ENCODE measurements at regions of chr6 and their contacts with region 1.

Region 1: DNA sequence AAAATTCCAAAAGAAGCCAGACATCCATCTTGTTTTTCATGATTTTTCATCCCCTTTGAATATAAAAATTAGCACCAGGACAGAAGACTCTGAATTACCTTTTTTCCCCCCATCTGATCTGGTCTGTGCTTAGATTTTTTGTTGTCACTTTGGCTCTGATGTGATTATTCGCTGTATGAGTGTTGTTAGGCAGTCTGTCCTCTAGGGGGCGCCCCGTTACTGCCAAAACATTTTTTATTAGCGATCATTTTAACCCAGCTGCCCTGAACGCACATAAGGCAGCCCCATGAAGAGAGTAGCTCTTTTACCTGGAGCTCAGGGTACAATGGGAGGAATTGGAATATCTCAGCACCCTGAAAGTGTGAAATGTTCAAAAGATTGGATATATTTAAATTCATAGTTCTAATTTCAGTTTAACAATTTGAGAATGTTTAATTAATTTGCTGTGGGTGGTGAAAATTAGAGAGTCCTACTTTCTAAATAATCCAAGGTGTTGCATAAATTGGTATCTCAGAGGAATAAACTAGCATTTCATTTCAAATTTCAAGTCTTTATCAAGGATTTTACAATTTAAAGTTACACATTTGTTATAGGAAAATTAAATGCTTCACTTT is 60.8 kb downstream of the PRPH2 start:
- DNase-seq: peak; percentile 62

Region 2: DNA sequence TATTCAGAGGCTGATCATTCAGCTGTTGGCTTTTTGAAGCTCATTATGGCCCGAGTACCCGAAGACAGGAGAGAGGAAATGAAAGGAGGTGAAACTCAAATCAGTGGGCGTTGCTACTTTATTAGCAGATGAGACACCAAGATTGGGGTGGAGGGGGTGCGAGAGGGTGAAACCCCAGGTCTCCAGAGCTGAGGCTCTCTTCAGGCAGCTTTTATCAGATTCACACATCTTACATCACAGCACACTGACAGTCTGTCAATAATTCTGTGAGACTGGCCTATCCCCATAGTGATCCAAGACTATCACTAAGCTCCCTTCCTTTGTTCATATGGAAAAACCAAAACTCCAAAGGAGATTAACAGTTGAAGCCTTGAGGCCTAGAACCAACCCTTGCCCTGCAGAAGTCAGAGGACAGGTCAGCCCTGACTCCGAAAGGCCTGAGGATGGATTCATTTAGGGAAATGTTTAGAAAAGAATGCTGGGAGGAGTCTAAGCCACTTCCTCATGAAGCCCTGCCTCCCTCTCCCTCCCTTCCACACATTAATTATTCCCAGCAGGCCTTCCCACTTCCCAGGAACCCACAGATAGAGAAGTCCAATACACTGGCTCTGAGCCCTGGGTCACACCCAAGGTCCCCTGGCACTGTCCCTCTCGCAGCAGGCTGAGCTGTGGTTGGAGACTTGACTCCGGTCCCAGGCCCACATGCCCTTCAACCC is 233.2 kb before region 1 on chr6:
- in situ Hi-C with region 1: no loop called
- DNase-seq: no peak

Region 3: GRCh38 chr6:42766141-42766670 is 104.6 kb after region 1 on chr6:
- in situ Hi-C with region 1: no loop called
- DNase-seq: no peak

Region 4: DNA sequence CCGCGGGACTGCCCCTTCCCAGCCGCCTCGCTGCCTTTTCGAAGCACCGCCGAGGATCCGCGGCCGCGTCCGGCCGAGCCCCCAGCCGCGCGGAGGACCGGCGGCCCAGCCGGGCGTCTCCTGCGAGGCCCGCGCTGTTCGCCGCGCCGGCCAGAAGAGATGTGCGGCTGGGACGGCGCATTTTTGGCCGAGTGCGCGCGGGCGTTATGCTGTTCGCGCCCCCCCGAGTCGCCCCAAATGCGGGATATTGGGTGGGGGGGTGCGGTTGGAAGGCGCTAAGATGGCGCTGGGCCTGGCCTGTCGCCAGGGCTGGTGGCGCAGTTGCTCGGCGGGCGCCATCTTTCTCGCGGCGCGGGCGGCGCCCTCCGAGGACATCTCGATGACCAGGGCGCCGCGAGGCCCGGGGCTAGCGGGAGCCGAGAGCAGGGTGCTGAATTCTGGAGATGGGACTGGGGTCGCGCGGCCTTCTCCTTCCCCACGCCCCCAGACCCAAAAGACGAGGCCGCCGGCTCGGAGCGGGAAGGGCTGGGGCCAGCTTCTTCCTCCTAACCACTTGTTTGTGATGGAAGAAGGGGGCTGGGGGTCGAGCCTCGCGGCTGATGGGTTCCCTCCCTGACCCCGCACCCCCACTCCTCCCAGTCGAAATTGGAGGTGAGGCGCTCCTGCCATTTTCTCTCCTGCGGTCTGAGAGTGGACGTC is 121.7 kb after region 1 on chr6:
- in situ Hi-C with region 1: no loop called
- DNase-seq: peak; percentile 63

Region 5: GRCh38 chr6:42864602-42865001 is 203.0 kb after region 1 on chr6:
- in situ Hi-C with region 1: loop called (anchors 25 kb)
- DNase-seq: no peak

Measured in ACHN (cell line).